Kidney (tissue), 22 donors: ENCODE measurements at regions of chr17 and their contacts with region 1.

Region 1: DNA sequence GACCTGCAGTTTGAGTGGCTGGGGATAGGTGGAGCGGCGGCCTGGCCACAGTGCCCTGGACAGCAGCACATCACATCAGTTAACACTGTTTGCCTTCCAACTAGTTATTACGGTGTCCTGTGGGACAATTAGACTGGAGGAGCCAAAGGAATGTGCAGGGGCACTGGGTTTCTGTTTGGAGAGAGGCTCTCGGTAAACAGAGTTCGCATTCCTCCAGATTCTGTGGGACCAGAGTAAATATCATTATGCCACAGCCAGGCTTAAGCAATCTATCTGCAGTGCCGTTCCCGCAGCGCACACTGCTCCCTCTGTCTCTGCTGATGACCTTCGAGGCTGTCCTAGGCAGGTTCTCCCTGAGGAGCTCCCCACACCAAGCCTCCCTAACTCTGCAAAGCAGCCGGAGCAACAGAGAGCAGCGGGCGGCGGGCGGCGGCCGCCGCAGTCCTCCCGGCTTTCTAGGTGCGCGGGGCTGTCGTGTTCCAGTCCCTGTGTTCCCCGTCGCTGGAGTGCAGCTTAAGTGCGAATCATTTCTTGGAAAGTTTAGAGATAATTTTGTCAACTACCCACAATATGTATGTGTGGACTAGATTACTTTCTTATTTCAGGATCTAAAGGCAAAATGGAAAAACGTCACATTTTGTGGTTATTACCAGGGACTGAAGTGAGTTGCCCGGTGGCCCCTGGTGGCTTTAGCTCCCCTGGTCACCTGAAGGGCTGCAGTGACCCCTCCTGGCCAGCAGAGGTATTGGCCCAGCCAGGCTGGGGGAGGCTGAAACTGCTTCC is 43.2 kb downstream of the PGS1 start:
- DNase-seq: peak; percentile 79 to 90 (median 84)
- H3K4me3 ChIP-seq: no peak overlapping the region
- H3K27ac ChIP-seq: no peak overlapping the region
- H3K4me1 ChIP-seq: peaks cover 0 to 12% (median 0%) of the 10 kb centered on the region in 3 donors
- H3K27me3 ChIP-seq: no peaks in the 10 kb centered on the region
- CTCF ChIP-seq: peak; percentile 94

Region 2: GRCh38 chr17:78289802-78290363 is 131.8 kb before region 1 on chr17:
- intact Hi-C with region 1: loop called (anchors 5 kb)
- DNase-seq: peak; percentile 88 to 95 (median 91)
- H3K4me3 ChIP-seq: peak overlapping the region in 1 of 3 donors; percentile 46
- H3K27ac ChIP-seq: no peak overlapping the region
- H3K4me1 ChIP-seq: peaks cover 0 to 2% (median 2%) of the 10 kb centered on the region in 3 donors
- H3K27me3 ChIP-seq: no peaks in the 10 kb centered on the region
- CTCF ChIP-seq: peak; percentile 75

Region 3: DNA sequence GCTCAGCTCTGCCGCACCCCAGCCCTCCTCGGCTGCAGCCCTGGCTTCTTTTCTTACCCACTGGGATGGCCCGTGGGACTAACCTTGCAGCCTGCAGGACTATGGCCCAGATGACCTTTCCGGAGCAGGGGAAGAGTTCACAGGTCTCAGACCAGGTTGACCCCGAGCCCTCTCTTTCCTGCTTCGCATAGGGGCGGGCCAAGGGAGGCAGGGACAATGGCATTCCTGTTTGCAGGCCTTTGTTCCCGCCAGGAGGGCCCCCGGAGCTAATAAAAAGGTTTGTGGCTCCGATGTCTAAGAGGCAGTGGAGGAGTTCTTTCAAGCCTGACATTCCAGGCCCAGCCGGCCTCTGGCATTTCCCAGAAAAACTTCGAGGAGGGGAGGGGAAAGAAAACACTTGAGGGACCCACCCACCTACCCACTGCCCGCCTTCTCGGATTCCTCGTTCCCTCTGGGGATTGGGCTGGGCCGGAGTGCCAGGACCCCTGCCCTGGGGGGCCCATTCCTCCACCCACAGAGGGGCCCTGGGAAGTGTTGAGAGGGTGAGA is 56.0 kb before region 1 on chr17:
- intact Hi-C with region 1: loop called (anchors 5 kb)
- DNase-seq: peak; percentile 92 to 98 (median 94)
- H3K4me3 ChIP-seq: no peak overlapping the region
- H3K27ac ChIP-seq: peak overlapping the region; percentile 51 to 85
- H3K4me1 ChIP-seq: peaks cover 5 to 8% (median 7%) of the 10 kb centered on the region in 3 donors
- H3K27me3 ChIP-seq: no peaks in the 10 kb centered on the region
- CTCF ChIP-seq: no peak

Region 4: DNA sequence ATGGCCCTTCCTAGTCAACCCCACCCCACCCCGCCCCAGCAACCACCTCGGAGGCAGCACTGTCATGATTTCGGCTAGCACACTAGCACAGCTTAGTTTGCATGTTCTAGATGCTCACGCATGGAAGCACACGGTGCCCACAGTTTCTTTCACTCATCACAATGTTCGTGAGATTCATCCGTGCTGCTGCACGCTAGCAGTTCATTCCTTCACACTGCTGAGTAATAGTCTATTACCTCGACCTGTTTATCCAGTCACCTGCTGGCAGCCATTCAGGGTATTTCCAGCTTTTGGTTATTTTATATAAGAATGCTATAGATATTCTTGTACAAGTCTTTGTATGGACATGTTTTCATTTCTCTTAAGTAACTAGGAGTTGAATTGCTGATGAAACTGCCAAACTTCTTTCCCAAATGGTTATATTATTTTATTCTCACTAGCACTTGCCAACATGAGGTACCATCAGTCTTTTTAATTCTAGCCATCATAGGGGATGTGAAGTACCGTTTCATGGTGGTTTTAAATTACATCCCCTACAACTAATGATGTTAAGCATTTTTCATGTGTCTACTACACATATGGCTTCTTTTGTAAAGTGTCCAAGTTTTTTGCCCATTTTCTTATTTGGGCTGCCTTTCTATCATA is 284.7 kb after region 1 on chr17:
- intact Hi-C with region 1: no loop called
- DNase-seq: no peak
- H3K4me3 ChIP-seq: no peak overlapping the region
- H3K27ac ChIP-seq: no peak overlapping the region
- H3K4me1 ChIP-seq: peaks cover 0 to 5% (median 2%) of the 10 kb centered on the region in 3 donors
- H3K27me3 ChIP-seq: no peaks in the 10 kb centered on the region
- CTCF ChIP-seq: no peak